Activated CD4-positive, alpha-beta memory T cell treated with anti-CD3 and anti-CD28 coated beads for 36 hours (primary cell): ENCODE measurements at regions of chr12 and their contacts with region 1.

Region 1: DNA sequence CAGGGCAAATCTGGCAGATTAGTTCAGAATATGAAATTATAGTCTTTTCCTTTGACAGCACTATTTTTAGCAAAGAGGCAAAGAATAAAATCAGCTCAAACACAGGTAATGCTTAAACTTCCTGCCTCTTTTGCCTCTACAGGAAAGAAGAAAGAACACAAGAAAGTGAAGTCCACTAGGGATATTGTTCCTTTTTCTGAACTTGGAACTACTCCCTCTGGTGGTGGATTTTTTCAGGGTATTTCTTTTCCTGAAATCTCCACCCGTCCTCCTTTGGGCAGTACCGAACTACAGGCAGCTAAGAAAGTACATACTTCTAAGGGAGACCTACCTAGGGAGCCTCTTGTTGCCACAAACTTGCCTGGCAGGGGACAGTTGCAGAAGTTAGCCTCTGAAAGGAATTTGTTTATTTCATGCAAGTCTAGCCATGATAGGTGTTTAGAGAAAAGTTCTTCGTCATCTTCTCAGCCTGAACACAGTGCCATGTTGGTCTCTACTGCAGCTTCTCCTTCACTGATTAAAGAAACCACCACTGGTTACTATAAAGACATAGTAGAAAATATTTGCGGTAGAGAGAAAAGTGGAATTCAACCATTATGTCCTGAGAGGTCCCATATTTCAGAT is 17.4 kb downstream of the TMPO start:
- DNase-seq: no peak
- H3K4me3 Mint-ChIP-seq: no peak overlapping the region
- H3K27ac Mint-ChIP-seq: no peak overlapping the region
- H3K4me1 Mint-ChIP-seq: peaks cover 4% of the 10 kb centered on the region
- H3K27me3 Mint-ChIP-seq: no peaks in the 10 kb centered on the region

Region 2: GRCh38 chr12:98424726-98425401 is 107.9 kb before region 1 on chr12:
- CTCF ChIA-PET with region 1: interaction called, 3 read pairs
- POLR2A ChIA-PET with region 1: no interaction called
- intact Hi-C with region 1: loop called (anchors 2 kb)
- DNase-seq: peak; percentile 74
- H3K4me3 Mint-ChIP-seq: no peak overlapping the region
- H3K27ac Mint-ChIP-seq: no peak overlapping the region
- H3K4me1 Mint-ChIP-seq: peaks cover 3% of the 10 kb centered on the region
- H3K27me3 Mint-ChIP-seq: no peaks in the 10 kb centered on the region

Region 3: DNA sequence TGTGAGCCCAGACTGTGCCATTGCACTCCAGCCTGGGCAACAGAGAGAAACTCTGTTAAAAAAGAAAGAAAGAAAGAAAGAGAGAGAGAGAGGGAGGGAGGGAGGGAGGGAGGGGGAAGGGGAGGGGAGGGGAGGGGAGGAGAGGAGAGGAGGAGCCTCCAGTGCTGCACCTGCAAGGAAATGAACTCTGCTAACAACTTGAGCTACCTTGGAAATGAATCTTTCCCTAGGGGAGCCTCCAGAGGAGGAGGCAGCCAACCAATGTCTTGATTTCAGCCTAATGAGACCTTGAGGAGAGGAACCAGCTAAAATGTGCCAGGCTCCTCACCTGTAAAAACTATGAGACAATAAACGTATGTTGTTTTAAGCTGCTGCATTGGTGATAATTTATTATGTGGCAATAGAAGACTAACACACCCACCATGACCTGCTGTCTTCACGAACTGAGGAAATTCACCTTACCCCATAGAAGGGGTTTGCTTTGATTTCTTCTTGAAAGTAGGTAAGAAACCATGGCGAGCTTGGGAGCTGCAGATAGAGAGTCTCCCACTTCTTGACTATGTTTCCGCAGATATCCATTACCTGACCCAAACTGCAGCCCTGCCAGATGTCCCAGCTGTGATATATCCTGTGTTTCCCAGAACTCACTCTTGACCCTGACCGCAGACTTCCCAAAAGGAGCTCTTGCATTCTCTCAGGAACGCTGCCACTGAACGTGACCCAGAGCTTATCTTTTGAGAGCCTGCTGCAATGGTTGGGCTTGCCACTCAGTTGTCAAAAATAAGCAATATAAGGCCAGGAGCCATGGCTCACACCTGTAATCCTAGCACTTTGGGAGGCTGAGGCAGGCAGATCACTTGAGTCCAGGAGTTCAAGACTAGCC is 48.9 kb before region 1 on chr12:
- CTCF ChIA-PET with region 1: interaction called, 10 read pairs
- POLR2A ChIA-PET with region 1: no interaction called
- intact Hi-C with region 1: no loop called
- DNase-seq: no peak
- H3K4me3 Mint-ChIP-seq: no peak overlapping the region
- H3K27ac Mint-ChIP-seq: no peak overlapping the region
- H3K4me1 Mint-ChIP-seq: no peaks in the 10 kb centered on the region
- H3K27me3 Mint-ChIP-seq: no peaks in the 10 kb centered on the region

Region 4: GRCh38 chr12:98490501-98491453 is 42.0 kb before region 1 on chr12:
- CTCF ChIA-PET with region 1: interaction called, 29 read pairs
- POLR2A ChIA-PET with region 1: no interaction called
- intact Hi-C with region 1: loop called (anchors 5 kb)
- DNase-seq: peak; percentile 89
- H3K4me3 Mint-ChIP-seq: peak overlapping the region; percentile 55
- H3K27ac Mint-ChIP-seq: peak overlapping the region; percentile 84
- H3K4me1 Mint-ChIP-seq: peaks cover 5% of the 10 kb centered on the region
- H3K27me3 Mint-ChIP-seq: no peaks in the 10 kb centered on the region

Region 5: DNA sequence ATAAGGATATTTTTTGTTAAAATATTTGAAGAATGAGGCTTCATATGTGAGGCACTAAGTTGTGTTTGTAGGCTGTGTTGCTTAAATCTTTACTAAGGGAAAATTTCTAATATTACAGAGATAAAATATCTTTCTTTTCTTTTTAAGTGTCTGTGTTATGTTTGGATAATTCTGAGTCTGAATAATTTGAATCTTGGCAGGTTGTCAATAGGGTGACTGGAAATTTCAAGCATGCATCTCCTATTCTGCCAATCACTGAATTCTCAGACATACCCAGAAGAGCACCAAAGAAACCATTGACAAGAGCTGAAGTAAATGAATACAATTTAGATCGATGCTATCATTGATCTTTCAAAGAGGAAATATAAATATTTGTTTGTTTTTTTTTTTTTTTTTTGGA is 12.0 kb after region 1 on chr12:
- CTCF ChIA-PET with region 1: interaction called, 5 read pairs
- POLR2A ChIA-PET with region 1: no interaction called
- intact Hi-C with region 1: loop called (anchors 2 kb)
- DNase-seq: no peak
- H3K4me3 Mint-ChIP-seq: no peak overlapping the region
- H3K27ac Mint-ChIP-seq: no peak overlapping the region
- H3K4me1 Mint-ChIP-seq: peaks cover 19% of the 10 kb centered on the region
- H3K27me3 Mint-ChIP-seq: no peaks in the 10 kb centered on the region

Region 6: GRCh38 chr12:98578821-98579220 is 46.0 kb after region 1 on chr12:
- CTCF ChIA-PET with region 1: no interaction called
- POLR2A ChIA-PET with region 1: no interaction called
- intact Hi-C with region 1: no loop called
- DNase-seq: no peak
- H3K4me3 Mint-ChIP-seq: no peak overlapping the region
- H3K27ac Mint-ChIP-seq: no peak overlapping the region
- H3K4me1 Mint-ChIP-seq: no peaks in the 10 kb centered on the region
- H3K27me3 Mint-ChIP-seq: no peaks in the 10 kb centered on the region

Region 7: GRCh38 chr12:98601924-98602323 is 69.1 kb after region 1 on chr12:
- CTCF ChIA-PET with region 1: interaction called, 10 read pairs
- POLR2A ChIA-PET with region 1: no interaction called
- intact Hi-C with region 1: no loop called
- DNase-seq: no peak
- H3K4me3 Mint-ChIP-seq: no peak overlapping the region
- H3K27ac Mint-ChIP-seq: no peak overlapping the region
- H3K4me1 Mint-ChIP-seq: peaks cover 10% of the 10 kb centered on the region
- H3K27me3 Mint-ChIP-seq: no peaks in the 10 kb centered on the region